Activated CD4-positive, alpha-beta T cell treated with anti-CD3 and anti-CD28 coated beads for 36 hours (primary cell): ENCODE measurements at regions of chr9 and their contacts with region 1.

Region 1: GRCh38 chr9:9016597-9016996 is 1217.0 kb upstream of the DMAC1 start:
- DNase-seq: no peak
- ATAC-seq: no peak
- H3K4me3 Mint-ChIP-seq: no peak overlapping the region
- H3K27ac Mint-ChIP-seq: no peak overlapping the region
- H3K4me1 Mint-ChIP-seq: no peaks in the 10 kb centered on the region
- H3K27me3 Mint-ChIP-seq: no peaks in the 10 kb centered on the region

Region 2: GRCh38 chr9:9079473-9079872 is 62.9 kb after region 1 on chr9:
- CTCF ChIA-PET with region 1: no interaction called
- POLR2A ChIA-PET with region 1: no interaction called
- intact Hi-C with region 1: loop called in 1 of 2 experiments (anchors 5 kb)
- DNase-seq: no peak
- ATAC-seq: no peak
- H3K4me3 Mint-ChIP-seq: no peak overlapping the region
- H3K27ac Mint-ChIP-seq: no peak overlapping the region
- H3K4me1 Mint-ChIP-seq: no peaks in the 10 kb centered on the region
- H3K27me3 Mint-ChIP-seq: no peaks in the 10 kb centered on the region